T-cell (primary cell): ENCODE measurements at regions of chr12 and their contacts with region 1.

Region 1: DNA sequence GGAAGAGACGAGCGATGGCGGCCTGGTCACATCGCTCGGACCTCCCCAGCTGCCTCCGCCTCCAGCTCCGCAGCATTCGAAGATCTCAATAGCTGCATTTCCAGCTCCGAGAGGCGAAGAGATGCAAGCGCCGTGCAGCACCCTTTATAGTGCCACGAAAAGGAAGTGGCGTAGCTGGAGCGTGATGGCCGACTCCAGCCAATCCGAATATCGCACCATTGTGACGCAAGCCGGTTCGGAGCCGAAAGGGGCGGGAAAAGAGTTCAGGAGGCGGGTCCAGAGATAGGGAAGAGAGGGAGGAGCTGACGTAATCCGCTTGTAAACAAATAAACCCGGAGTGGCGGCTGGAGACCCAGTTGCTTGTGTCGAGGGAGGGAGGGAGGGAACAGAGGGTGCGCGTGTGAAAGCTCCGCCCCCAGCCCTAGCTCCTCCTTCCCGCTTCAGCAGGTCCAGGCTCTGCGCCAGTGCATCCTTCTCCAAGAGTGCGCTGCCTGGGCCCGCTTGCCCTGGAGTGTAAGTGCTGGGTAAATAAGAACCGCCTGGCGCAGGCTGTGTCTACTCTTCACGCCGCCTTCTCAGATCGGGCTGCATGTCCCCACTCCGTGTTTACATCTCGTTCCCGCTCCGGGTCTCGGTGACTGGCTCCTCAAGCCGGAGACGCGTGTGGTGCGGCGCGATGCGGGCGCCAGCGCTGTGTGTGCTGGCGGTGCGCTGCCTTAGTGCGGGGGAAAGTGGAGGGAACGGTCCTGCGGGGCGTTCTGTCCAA is at the start of gene BTG1:
- DNase-seq: peak; percentile 95 to 100 (median 99)
- ATAC-seq: peak; percentile 76 to 83 (median 80)
- H3K4me3 ChIP-seq: peak within 1 kb of the TSS; percentile 77 to 98
- H3K4me3 Mint-ChIP-seq: peak within 1 kb of the TSS; percentile 100
- H3K27ac ChIP-seq: peak within 1 kb of the TSS; percentile 94
- H3K27ac Mint-ChIP-seq: peak within 1 kb of the TSS; percentile 99 to 100
- H3K4me1 ChIP-seq: peaks cover 10% of the 10 kb centered on the region in 2 experiments
- H3K4me1 Mint-ChIP-seq: peaks cover 27 to 51% (median 32%) of the 10 kb centered on the region in 3 donors
- H3K27me3 ChIP-seq: no peaks in the 10 kb centered on the region
- H3K27me3 Mint-ChIP-seq: no peaks in the 10 kb centered on the region
- total RNA-seq, gene BTG1: 484 to 1,238 (median 551) TPM

Region 2: GRCh38 chr12:91577586-91578539 is 568.1 kb before region 1 on chr12:
- CTCF ChIA-PET with region 1: interaction called in 1 of 2 experiments, 3 read pairs
- POLR2A ChIA-PET with region 1: interaction called in 1 of 2 experiments, 10 read pairs
- DNase-seq: peak in 1 of 35 experiments; percentile 49
- ATAC-seq: peak; percentile 65 to 76 (median 74)
- H3K4me3 ChIP-seq: peak overlapping the region in 1 of 2 donors; percentile 40
- H3K4me3 Mint-ChIP-seq: peak overlapping the region; percentile 66 to 79 (median 78)
- H3K27ac ChIP-seq: no peak overlapping the region
- H3K27ac Mint-ChIP-seq: peak overlapping the region; percentile 67 to 80
- H3K4me1 ChIP-seq: peaks cover 0 to 2% of the 10 kb centered on the region in 2 experiments
- H3K4me1 Mint-ChIP-seq: peaks cover 21 to 32% (median 21%) of the 10 kb centered on the region in 3 donors
- H3K27me3 ChIP-seq: no peaks in the 10 kb centered on the region
- H3K27me3 Mint-ChIP-seq: peaks cover 0 to 2% of the 10 kb centered on the region in 2 donors

Region 3: GRCh38 chr12:92030618-92031017 is 115.3 kb before region 1 on chr12:
- CTCF ChIA-PET with region 1: interaction called in 1 of 2 experiments, 6 read pairs
- POLR2A ChIA-PET with region 1: interaction called, 10 to 53 read pairs
- DNase-seq: peak in 34 of 35 experiments; percentile 46 to 88 (median 67)
- ATAC-seq: peak; percentile 92
- H3K4me3 ChIP-seq: peak overlapping the region in 1 of 2 donors; percentile 11
- H3K4me3 Mint-ChIP-seq: peak overlapping the region; percentile 58 to 71 (median 66)
- H3K27ac ChIP-seq: peak overlapping the region; percentile 94
- H3K27ac Mint-ChIP-seq: peak overlapping the region; percentile 97 to 98
- H3K4me1 ChIP-seq: peaks cover 60 to 62% of the 10 kb centered on the region in 2 experiments
- H3K4me1 Mint-ChIP-seq: peaks cover 87 to 91% (median 89%) of the 10 kb centered on the region in 3 donors
- H3K27me3 ChIP-seq: no peaks in the 10 kb centered on the region
- H3K27me3 Mint-ChIP-seq: no peaks in the 10 kb centered on the region

Region 4: GRCh38 chr12:92123780-92124688 is 21.9 kb before region 1 on chr12:
- CTCF ChIA-PET with region 1: interaction called in 1 of 2 experiments, 3 read pairs
- POLR2A ChIA-PET with region 1: interaction called, 4 to 170 read pairs
- DNase-seq: no peak
- ATAC-seq: peak in 1 of 4 experiments; percentile 3
- H3K4me3 ChIP-seq: no peak overlapping the region
- H3K4me3 Mint-ChIP-seq: peak overlapping the region in 2 of 3 donors; percentile 40 to 100
- H3K27ac ChIP-seq: no peak overlapping the region
- H3K27ac Mint-ChIP-seq: peak overlapping the region; percentile 69 to 72
- H3K4me1 ChIP-seq: peaks cover 4 to 10% of the 10 kb centered on the region in 2 experiments
- H3K4me1 Mint-ChIP-seq: peaks cover 59 to 66% (median 62%) of the 10 kb centered on the region in 3 donors
- H3K27me3 ChIP-seq: no peaks in the 10 kb centered on the region
- H3K27me3 Mint-ChIP-seq: no peaks in the 10 kb centered on the region

Region 5: DNA sequence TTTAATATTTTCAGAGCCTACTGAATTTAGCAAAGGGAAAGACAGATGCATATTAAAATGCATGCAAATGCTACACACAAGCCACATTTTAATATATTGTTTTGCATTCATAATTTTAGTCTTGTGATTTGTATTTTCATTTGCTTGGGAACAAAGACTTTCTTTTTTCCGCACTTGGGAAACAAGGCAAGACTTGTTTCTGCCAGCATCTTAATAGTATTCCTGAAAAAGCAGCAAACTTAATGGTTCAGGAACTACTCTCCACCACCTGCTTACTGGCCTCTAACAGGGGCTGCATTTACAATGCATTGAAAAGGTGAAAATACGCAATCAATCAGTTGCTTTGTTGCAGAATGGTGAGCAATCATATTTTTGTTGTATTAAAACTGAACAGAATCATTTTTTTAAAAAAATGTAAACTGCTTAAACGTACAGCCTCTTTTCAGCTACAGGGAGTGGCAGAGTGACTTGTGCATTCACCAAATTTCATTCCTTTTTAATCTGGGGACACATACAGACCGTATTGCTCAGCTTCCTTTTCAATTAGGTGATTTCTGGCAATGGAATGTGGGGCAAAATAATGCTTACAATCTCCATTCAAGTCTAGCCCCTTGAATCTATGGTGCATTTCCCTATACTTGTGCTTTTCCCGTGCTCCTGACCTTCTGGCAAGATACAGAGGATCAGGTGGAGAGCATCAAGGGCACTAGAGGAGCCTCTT is 143.9 kb after region 1 on chr12:
- CTCF ChIA-PET with region 1: no interaction called
- POLR2A ChIA-PET with region 1: interaction called in 1 of 2 experiments, 11 read pairs
- DNase-seq: no peak
- ATAC-seq: no peak
- H3K4me3 ChIP-seq: no peak overlapping the region
- H3K4me3 Mint-ChIP-seq: no peak overlapping the region
- H3K27ac ChIP-seq: no peak overlapping the region
- H3K27ac Mint-ChIP-seq: no peak overlapping the region
- H3K4me1 ChIP-seq: no peaks in the 10 kb centered on the region
- H3K4me1 Mint-ChIP-seq: peaks cover 11 to 24% (median 17%) of the 10 kb centered on the region in 3 donors
- H3K27me3 ChIP-seq: no peaks in the 10 kb centered on the region
- H3K27me3 Mint-ChIP-seq: no peaks in the 10 kb centered on the region

Region 6: DNA sequence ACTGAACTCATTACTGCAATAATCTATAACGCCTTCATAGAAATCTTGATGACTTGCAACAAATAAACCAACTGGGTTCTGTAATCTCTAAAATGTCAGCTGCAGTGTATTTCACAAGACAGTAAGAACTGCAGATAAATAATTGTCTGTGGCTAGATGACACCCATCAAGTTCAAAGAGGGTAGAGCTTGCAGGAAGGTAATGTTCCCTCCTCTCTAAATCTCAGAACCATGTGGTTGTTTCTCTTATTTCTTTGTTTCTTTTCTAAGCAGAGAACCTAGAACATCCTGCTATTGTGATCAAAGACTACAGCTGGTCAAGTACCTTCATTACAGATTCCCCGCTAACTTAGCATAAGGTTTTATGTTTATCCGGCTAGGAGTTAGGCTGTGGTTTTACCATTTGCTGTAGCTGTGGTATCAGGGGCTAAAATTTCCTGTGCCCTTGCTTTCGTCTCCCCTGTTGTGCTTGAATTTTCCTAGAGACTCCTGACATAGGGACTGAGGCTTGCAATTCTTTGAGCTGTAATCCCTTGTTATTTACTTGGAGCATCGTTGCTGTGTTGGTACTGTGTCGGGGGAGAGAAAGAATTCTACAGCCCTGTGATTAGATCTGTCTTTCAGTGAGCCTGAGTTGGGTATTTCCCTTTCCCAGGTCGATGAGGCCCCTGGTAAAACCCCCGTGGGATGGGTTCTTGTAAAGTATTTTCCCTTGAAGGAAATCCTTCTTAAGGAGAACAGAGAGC is 252.8 kb after region 1 on chr12:
- CTCF ChIA-PET with region 1: interaction called in 1 of 2 experiments, 4 read pairs
- POLR2A ChIA-PET with region 1: interaction called, 30 to 66 read pairs
- DNase-seq: peak in 16 of 35 experiments; percentile 7 to 74 (median 33)
- ATAC-seq: peak; percentile 91 to 93 (median 92)
- H3K4me3 ChIP-seq: no peak overlapping the region
- H3K4me3 Mint-ChIP-seq: peak overlapping the region; percentile 21 to 60 (median 47)
- H3K27ac ChIP-seq: peak overlapping the region; percentile 81
- H3K27ac Mint-ChIP-seq: peak overlapping the region; percentile 95 to 96
- H3K4me1 ChIP-seq: peaks cover 72 to 80% of the 10 kb centered on the region in 2 experiments
- H3K4me1 Mint-ChIP-seq: peaks cover 100% of the 10 kb centered on the region in 3 donors
- H3K27me3 ChIP-seq: no peaks in the 10 kb centered on the region
- H3K27me3 Mint-ChIP-seq: no peaks in the 10 kb centered on the region

Region 7: GRCh38 chr12:92593734-92594402 is 448.0 kb after region 1 on chr12:
- CTCF ChIA-PET with region 1: interaction called in 1 of 2 experiments, 4 read pairs
- POLR2A ChIA-PET with region 1: interaction called, 5 to 91 read pairs
- DNase-seq: peak; percentile 40 to 95 (median 82)
- ATAC-seq: peak; percentile 92 to 94 (median 92)
- H3K4me3 ChIP-seq: peak overlapping the region in 1 of 2 donors; percentile 5
- H3K4me3 Mint-ChIP-seq: peak overlapping the region; percentile 37 to 42 (median 40)
- H3K27ac ChIP-seq: peak overlapping the region; percentile 98
- H3K27ac Mint-ChIP-seq: peak overlapping the region; percentile 97 to 99
- H3K4me1 ChIP-seq: peaks cover 4 to 27% of the 10 kb centered on the region in 2 experiments
- H3K4me1 Mint-ChIP-seq: peaks cover 41 to 81% (median 76%) of the 10 kb centered on the region in 3 donors
- H3K27me3 ChIP-seq: no peaks in the 10 kb centered on the region
- H3K27me3 Mint-ChIP-seq: no peaks in the 10 kb centered on the region